Dorsolateral prefrontal cortex (tissue), 120 donors: ENCODE measurements at regions of chr16 and their contacts with region 1.

Region 1: GRCh38 chr16:50245417-50246298 is 20.7 kb upstream of the ADCY7 start:
- DNase-seq: peak in 1 of 10 donors; percentile 63
- H3K4me3 ChIP-seq: peak overlapping the region; percentile 41 to 76 (median 65)
- H3K27ac ChIP-seq: peak overlapping the region in 1 of 59 donors; percentile 21
- H3K27me3 ChIP-seq: peaks cover 0 to 19% (median 0%) of the 10 kb centered on the region in 45 donors
- CTCF ChIP-seq: peak in 23 of 56 donors; percentile 12 to 62 (median 34)

Region 2: GRCh38 chr16:50284131-50284911 is 38.7 kb after region 1 on chr16:
- intact Hi-C with region 1: no loop called
- DNase-seq: no peak
- H3K4me3 ChIP-seq: no peak overlapping the region
- H3K27ac ChIP-seq: no peak overlapping the region
- H3K27me3 ChIP-seq: no peaks in the 10 kb centered on the region
- CTCF ChIP-seq: no peak

Region 3: DNA sequence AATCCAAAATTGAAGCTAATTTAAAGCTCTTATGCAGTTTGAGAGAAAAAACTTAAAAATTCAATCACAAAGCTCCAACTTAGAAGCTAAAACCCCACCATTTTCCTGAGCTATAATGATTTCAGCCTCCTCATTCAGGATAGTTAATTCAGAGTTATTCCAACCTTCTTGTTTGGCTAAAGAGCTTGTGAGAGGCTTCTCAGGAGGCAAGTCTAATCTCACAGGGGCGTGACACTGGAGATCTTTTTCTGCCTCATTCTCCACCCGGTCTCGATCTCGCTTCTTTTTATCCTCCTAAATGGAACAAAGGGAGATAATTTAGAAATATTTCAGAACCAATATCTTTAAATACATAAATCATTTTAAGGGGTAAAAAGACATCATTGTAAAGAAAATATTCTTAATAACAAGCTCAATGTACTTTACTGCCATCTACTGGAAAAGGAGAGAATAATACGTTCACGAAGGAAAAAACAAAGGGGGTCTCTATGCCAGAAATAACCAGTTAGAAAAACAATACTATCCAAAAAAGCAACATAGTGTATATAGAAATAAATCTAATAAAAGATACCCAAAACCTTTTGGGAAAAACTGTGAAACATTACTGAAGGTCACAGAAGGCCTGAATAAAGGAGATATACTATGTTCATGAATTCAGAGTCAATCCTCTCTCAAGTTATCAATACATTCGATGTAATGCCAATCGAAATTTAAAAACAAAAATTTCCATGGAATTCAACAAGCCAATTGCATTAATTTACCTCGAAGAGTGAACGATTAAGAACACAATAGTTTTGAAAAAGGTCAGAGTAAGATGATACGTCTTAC is 109.2 kb after region 1 on chr16:
- intact Hi-C with region 1: loop called (anchors 10 kb)
- DNase-seq: no peak
- H3K4me3 ChIP-seq: no peak overlapping the region
- H3K27ac ChIP-seq: no peak overlapping the region
- H3K27me3 ChIP-seq: no peaks in the 10 kb centered on the region
- CTCF ChIP-seq: peak in 55 of 56 donors; percentile 20 to 81 (median 57)